Activated CD8-positive, alpha-beta T cell treated with anti-CD3 and anti-CD28 coated beads for 36 hours (primary cell): ENCODE measurements at regions of chr17 and their contacts with region 1.

Region 1: GRCh38 chr17:5587438-5588032 is 3.2 kb upstream of the NLRP1 start:
- DNase-seq: peak; percentile 58
- ATAC-seq: no peak
- H3K4me3 Mint-ChIP-seq: no peak overlapping the region
- H3K27ac Mint-ChIP-seq: peak overlapping the region; percentile 6
- H3K4me1 Mint-ChIP-seq: peaks cover 29% of the 10 kb centered on the region
- H3K27me3 Mint-ChIP-seq: no peaks in the 10 kb centered on the region
- CTCF ChIP-seq: peak; percentile 97

Region 2: DNA sequence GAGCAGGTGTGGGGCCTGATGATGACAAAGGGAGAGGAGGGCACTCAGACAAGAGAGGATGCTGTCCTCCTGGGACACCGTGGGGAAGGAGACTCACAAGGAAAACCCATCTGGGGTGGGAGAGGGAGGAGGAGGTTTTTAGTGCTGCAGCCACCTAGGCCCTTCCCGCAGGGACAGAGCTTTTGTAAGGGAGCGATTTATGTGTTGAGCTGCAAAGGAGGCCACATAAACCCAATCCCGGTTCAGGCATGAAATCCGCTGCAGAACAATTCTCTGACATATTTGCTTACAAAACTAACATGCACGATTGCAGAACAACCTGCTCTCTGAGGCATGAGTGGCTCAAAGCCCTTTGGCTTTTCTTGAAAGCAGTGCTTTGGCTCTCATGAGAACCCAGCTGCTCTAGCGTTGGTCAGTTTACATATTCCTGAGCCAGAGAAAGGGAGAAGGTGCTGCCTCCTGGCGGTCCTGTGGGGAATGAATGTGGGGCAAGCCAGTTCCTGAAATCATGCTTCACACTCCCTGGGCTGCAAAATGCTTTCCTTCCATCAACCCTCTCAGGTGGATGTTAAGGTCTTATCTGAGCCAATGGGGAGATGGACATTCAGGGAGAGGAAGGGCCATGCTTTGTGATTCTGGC is 119.2 kb after region 1 on chr17:
- CTCF ChIA-PET with region 1: interaction called, 36 read pairs
- POLR2A ChIA-PET with region 1: no interaction called
- intact Hi-C with region 1: loop called (anchors 5 kb)
- DNase-seq: peak; percentile 75
- ATAC-seq: no peak
- H3K4me3 Mint-ChIP-seq: no peak overlapping the region
- H3K27ac Mint-ChIP-seq: no peak overlapping the region
- H3K4me1 Mint-ChIP-seq: no peaks in the 10 kb centered on the region
- H3K27me3 Mint-ChIP-seq: peaks cover 10% of the 10 kb centered on the region
- CTCF ChIP-seq: peak; percentile 77

Region 3: GRCh38 chr17:6421700-6422604 is 834.4 kb after region 1 on chr17:
- CTCF ChIA-PET with region 1: interaction called, 4 read pairs
- POLR2A ChIA-PET with region 1: no interaction called
- intact Hi-C with region 1: loop called (anchors 5 kb)
- DNase-seq: peak; percentile 81
- ATAC-seq: peak; percentile 73
- H3K4me3 Mint-ChIP-seq: no peak overlapping the region
- H3K27ac Mint-ChIP-seq: no peak overlapping the region
- H3K4me1 Mint-ChIP-seq: no peaks in the 10 kb centered on the region
- H3K27me3 Mint-ChIP-seq: peaks cover 8% of the 10 kb centered on the region
- CTCF ChIP-seq: peak; percentile 85

Region 4: GRCh38 chr17:6435968-6436367 is 848.4 kb after region 1 on chr17:
- CTCF ChIA-PET with region 1: interaction called, 10 read pairs
- POLR2A ChIA-PET with region 1: no interaction called
- intact Hi-C with region 1: no loop called
- DNase-seq: peak; percentile 70
- ATAC-seq: peak; percentile 98
- H3K4me3 Mint-ChIP-seq: no peak overlapping the region
- H3K27ac Mint-ChIP-seq: no peak overlapping the region
- H3K4me1 Mint-ChIP-seq: no peaks in the 10 kb centered on the region
- H3K27me3 Mint-ChIP-seq: peaks cover 15% of the 10 kb centered on the region
- CTCF ChIP-seq: peak; percentile 77